ENCODE measurements at regions of chr7 and their contacts with region 1.

Region 1: DNA sequence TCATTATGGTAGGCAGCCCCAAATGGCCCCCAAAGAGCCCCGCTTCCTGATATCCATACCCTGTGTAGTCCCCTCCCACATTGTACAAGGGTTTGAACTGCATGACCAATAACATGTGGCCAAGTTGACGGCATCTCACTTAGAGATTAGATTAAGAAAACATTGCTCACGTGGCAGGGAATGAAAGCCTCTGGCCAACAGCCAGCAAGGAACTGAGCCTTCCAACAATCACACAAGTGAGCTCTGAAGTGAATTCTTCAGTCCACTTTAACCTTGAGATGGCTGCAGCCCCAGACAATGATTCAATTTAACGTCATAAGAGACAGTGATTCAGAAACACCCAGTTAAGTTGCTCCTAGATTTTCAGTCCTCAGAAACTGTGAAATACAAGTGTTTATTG is 165.9 kb upstream of the PLXNA4 start:
- DNase-seq: no peak
- ATAC-seq: no peak
- H3K4me3 Mint-ChIP-seq: no peak overlapping the region
- H3K27ac Mint-ChIP-seq: no peak overlapping the region
- H3K4me1 Mint-ChIP-seq: no peaks in the 10 kb centered on the region
- H3K27me3 Mint-ChIP-seq: peaks cover 7% of the 10 kb centered on the region

Region 2: GRCh38 chr7:134062460-134062859 is 1320.3 kb after region 1 on chr7:
- CTCF ChIA-PET with region 1: no interaction called
- POLR2A ChIA-PET with region 1: no interaction called
- intact Hi-C with region 1: loop called in 1 of 2 experiments (anchors 10 kb)
- DNase-seq: no peak
- ATAC-seq: no peak
- H3K4me3 Mint-ChIP-seq: no peak overlapping the region
- H3K27ac Mint-ChIP-seq: no peak overlapping the region
- H3K4me1 Mint-ChIP-seq: no peaks in the 10 kb centered on the region
- H3K27me3 Mint-ChIP-seq: no peaks in the 10 kb centered on the region